Endothelial cell of umbilical vein (primary cell): ENCODE measurements at regions of chr16 and their contacts with region 1.

Region 1: DNA sequence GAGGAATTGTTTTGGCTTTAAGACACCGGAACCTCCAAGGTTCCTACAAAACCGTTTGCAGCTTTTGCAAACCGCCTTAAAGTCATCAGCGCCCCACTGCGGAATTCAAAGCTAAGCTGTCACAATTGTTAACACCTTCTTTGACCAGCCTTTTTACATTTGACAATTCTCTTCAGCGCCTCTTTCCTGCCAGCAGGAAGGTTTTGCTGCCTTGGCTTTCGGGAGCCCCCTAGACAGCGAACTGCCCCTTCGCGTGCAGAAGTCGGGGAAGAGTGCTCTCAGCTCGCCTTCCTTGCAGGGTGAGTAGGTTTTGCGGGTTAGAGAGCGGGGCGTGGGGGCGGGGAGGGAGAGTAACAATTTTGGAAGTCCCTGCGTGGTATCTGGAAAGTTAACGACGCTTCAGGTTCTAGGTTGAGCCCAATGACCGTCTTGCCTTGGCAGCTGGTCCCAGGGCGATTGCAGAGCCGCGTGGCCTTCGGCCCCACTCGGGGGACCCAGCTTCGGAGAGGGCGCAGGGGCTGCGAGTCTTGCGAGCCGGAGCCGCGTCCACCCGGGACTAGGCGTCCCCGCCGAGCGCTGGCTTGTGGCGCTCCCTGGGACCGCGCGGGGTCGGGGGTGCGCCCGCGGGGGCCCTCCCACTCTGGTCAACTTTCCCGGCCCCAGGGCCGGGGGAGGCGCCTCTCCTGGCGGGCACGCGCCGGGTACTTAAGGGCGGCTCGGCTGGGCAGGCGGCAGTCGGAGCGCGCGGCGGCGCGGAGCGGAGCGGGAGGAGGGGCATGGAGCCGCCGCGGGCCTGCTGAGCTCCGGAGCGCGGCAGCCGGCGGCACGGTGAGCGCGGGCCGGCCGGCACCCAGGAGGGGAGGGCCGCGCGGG is at the start of gene HAS3:
- DNase-seq: peak; percentile 69
- H3K4me3 ChIP-seq: peak within 1 kb of the TSS; percentile 40 to 57 (median 54)
- H3K27ac ChIP-seq: no peak within 1 kb of the TSS
- H3K4me1 ChIP-seq: peaks cover 21% of the 10 kb centered on the region
- H3K27me3 ChIP-seq: no peaks in the 10 kb centered on the region
- CTCF ChIP-seq: peak; percentile 16 to 32
- POLR2A ChIP-seq: peak; percentile 57
- total RNA-seq, gene HAS3: 1.8 TPM in 2 replicates

Region 2: DNA sequence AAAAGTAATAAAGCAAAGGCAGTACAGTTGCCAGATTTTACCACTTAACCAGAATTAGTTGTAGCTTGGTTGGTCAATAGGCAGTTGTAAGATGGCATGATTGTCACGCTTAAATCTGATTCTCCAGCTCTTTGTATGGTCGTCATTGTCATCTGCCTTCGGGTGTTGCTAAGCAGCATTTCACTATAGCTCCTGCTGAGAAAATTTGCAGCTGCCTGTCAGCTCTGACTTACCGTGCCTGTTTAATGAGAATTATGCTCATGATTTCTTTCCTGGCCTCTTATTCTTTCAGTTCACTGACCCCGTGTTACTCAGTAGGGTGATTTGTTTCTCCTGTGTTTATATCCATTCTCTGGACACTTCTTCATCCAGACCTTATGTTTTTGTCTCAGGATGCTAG is 195.7 kb before region 1 on chr16:
- CTCF ChIA-PET with region 1: interaction called, 11 read pairs
- POLR2A ChIA-PET with region 1: interaction called, 7 read pairs
- dilution Hi-C with region 1: no loop called
- intact Hi-C with region 1: no loop called
- DNase-seq: no peak
- H3K4me3 ChIP-seq: no peak overlapping the region
- H3K27ac ChIP-seq: no peak overlapping the region
- H3K4me1 ChIP-seq: no peaks in the 10 kb centered on the region
- H3K27me3 ChIP-seq: no peaks in the 10 kb centered on the region
- CTCF ChIP-seq: no peak
- POLR2A ChIP-seq: no peak

Region 3: GRCh38 chr16:68972720-68973119 is 133.0 kb before region 1 on chr16:
- CTCF ChIA-PET with region 1: interaction called, 19 read pairs
- POLR2A ChIA-PET with region 1: no interaction called
- dilution Hi-C with region 1: no loop called
- intact Hi-C with region 1: loop called (anchors 1 kb)
- DNase-seq: peak; percentile 81
- H3K4me3 ChIP-seq: no peak overlapping the region
- H3K27ac ChIP-seq: peak overlapping the region; percentile 71
- H3K4me1 ChIP-seq: peaks cover 13% of the 10 kb centered on the region
- H3K27me3 ChIP-seq: no peaks in the 10 kb centered on the region
- CTCF ChIP-seq: peak; percentile 44 to 54
- POLR2A ChIP-seq: no peak